CD4-positive, alpha-beta memory T cell (primary cell): ENCODE measurements at regions of chr3 and their contacts with region 1.

Region 1: GRCh38 chr3:46705022-46705530 is 3.9 kb downstream of the TMIE start:
- DNase-seq: peak; percentile 63 to 72 (median 68)
- H3K4me3 ChIP-seq: no peak overlapping the region
- H3K4me3 Mint-ChIP-seq: no peak overlapping the region
- H3K27ac ChIP-seq: no peak overlapping the region
- H3K27ac Mint-ChIP-seq: peak overlapping the region in 1 of 7 donors; percentile 24
- H3K4me1 ChIP-seq: peaks cover 18% of the 10 kb centered on the region
- H3K4me1 Mint-ChIP-seq: peaks cover 6 to 19% (median 9%) of the 10 kb centered on the region in 4 donors
- H3K27me3 ChIP-seq: no peaks in the 10 kb centered on the region
- H3K27me3 Mint-ChIP-seq: peaks cover 0 to 2% of the 10 kb centered on the region in 2 donors

Region 2: DNA sequence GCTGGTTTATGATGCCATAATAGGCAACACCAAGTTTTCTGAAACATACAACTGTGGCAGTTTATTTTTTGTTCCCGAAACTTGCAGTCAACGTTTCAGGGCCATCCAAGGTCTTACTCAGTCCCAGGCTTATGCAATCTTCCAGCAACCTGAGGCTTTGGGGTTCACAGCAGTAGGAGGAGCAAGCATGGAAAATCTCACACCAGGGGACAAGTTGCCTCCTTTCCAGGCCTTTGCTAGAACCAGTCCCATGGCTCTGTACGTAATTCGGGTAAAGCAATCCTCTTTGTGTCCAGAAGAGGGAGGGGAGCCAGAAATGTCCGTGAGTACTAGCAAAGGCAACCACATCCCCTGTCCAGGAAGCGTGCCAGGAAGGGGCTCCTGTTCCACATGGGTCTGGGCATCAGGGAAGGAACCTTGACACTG is 97.5 kb before region 1 on chr3:
- CTCF ChIA-PET with region 1: no interaction called
- POLR2A ChIA-PET with region 1: no interaction called
- intact Hi-C with region 1: no loop called
- DNase-seq: no peak
- H3K4me3 ChIP-seq: no peak overlapping the region
- H3K4me3 Mint-ChIP-seq: no peak overlapping the region
- H3K27ac ChIP-seq: no peak overlapping the region
- H3K27ac Mint-ChIP-seq: no peak overlapping the region
- H3K4me1 ChIP-seq: no peaks in the 10 kb centered on the region
- H3K4me1 Mint-ChIP-seq: no peaks in the 10 kb centered on the region
- H3K27me3 ChIP-seq: peaks cover 5% of the 10 kb centered on the region
- H3K27me3 Mint-ChIP-seq: peaks cover 1% of the 10 kb centered on the region in 2 donors

Region 3: DNA sequence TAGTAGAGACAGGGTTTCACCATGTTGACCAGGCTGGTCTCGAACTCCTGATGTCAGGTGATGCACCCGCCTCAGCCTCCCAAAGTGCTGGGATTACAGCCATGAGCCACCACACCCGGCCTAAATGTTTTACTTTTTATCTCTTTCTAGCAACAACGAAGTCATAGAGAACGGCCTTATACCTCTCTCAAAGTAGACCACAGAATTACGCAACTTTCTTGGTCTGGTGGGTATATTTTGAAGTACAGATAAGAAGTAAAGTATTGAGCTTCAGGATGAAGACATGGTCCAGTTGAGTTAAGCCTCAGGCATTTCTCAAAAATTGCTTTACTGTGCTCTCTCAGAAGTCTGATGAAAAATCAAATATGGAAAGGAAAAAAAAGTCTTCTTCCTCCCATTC is 62.1 kb before region 1 on chr3:
- CTCF ChIA-PET with region 1: no interaction called
- POLR2A ChIA-PET with region 1: no interaction called
- intact Hi-C with region 1: no loop called
- DNase-seq: no peak
- H3K4me3 ChIP-seq: no peak overlapping the region
- H3K4me3 Mint-ChIP-seq: no peak overlapping the region
- H3K27ac ChIP-seq: no peak overlapping the region
- H3K27ac Mint-ChIP-seq: no peak overlapping the region
- H3K4me1 ChIP-seq: no peaks in the 10 kb centered on the region
- H3K4me1 Mint-ChIP-seq: no peaks in the 10 kb centered on the region
- H3K27me3 ChIP-seq: peaks cover 8% of the 10 kb centered on the region
- H3K27me3 Mint-ChIP-seq: peaks cover 17 to 18% of the 10 kb centered on the region in 2 donors

Region 4: GRCh38 chr3:46663591-46664135 is 41.4 kb before region 1 on chr3:
- CTCF ChIA-PET with region 1: no interaction called
- POLR2A ChIA-PET with region 1: no interaction called
- intact Hi-C with region 1: no loop called
- DNase-seq: peak in 1 of 5 donors; percentile 5
- H3K4me3 ChIP-seq: no peak overlapping the region
- H3K4me3 Mint-ChIP-seq: no peak overlapping the region
- H3K27ac ChIP-seq: no peak overlapping the region
- H3K27ac Mint-ChIP-seq: peak overlapping the region in 3 of 7 donors; percentile 36 to 73 (median 37)
- H3K4me1 ChIP-seq: no peaks in the 10 kb centered on the region
- H3K4me1 Mint-ChIP-seq: peaks cover 0 to 10% (median 0%) of the 10 kb centered on the region in 4 donors
- H3K27me3 ChIP-seq: no peaks in the 10 kb centered on the region
- H3K27me3 Mint-ChIP-seq: no peaks in the 10 kb centered on the region

Region 5: DNA sequence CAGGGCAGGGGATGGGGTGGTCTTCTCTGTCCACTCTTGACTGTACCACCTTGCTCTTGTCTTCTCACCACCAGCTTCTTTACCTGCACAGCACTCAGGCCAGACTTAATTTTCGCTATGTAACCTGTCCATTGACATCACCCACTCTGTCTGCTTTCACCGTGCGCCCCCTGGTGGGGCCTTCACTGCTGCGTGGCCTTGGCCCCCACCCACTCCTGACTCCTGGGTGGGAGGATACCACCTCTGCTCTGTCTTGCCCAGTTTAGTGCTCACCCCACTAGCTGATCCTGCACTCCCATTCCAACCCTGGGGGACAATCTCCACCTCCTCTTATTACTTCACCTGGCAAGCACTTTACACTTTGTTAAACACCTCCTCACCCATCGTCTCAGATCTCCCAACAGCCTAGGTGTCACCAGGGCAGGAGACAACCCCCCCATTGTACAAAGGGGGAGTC is 190.2 kb after region 1 on chr3:
- CTCF ChIA-PET with region 1: interaction called, 16 read pairs
- POLR2A ChIA-PET with region 1: no interaction called
- intact Hi-C with region 1: no loop called
- DNase-seq: peak; percentile 71 to 78 (median 74)
- H3K4me3 ChIP-seq: no peak overlapping the region
- H3K4me3 Mint-ChIP-seq: peak overlapping the region in 1 of 8 donors; percentile 18
- H3K27ac ChIP-seq: no peak overlapping the region
- H3K27ac Mint-ChIP-seq: peak overlapping the region in 4 of 7 donors; percentile 0 to 66 (median 46)
- H3K4me1 ChIP-seq: peaks cover 5% of the 10 kb centered on the region
- H3K4me1 Mint-ChIP-seq: peaks cover 6 to 26% (median 15%) of the 10 kb centered on the region in 4 donors
- H3K27me3 ChIP-seq: peaks cover 3% of the 10 kb centered on the region
- H3K27me3 Mint-ChIP-seq: peaks cover 25 to 46% of the 10 kb centered on the region in 2 donors

Region 6: GRCh38 chr3:46909535-46910442 is 204.7 kb after region 1 on chr3:
- CTCF ChIA-PET with region 1: interaction called, 5 read pairs
- POLR2A ChIA-PET with region 1: interaction called, 4 read pairs
- intact Hi-C with region 1: loop called (anchors 1 kb)
- DNase-seq: peak; percentile 64 to 82 (median 70)
- H3K4me3 ChIP-seq: no peak overlapping the region
- H3K4me3 Mint-ChIP-seq: peak overlapping the region in 1 of 8 donors; percentile 23
- H3K27ac ChIP-seq: no peak overlapping the region
- H3K27ac Mint-ChIP-seq: peak overlapping the region in 2 of 7 donors; percentile 4 to 30
- H3K4me1 ChIP-seq: peaks cover 27% of the 10 kb centered on the region
- H3K4me1 Mint-ChIP-seq: peaks cover 13 to 18% (median 17%) of the 10 kb centered on the region in 4 donors
- H3K27me3 ChIP-seq: no peaks in the 10 kb centered on the region
- H3K27me3 Mint-ChIP-seq: no peaks in the 10 kb centered on the region

Region 7: GRCh38 chr3:47324278-47324865 is 619.3 kb after region 1 on chr3:
- CTCF ChIA-PET with region 1: interaction called, 3 read pairs
- POLR2A ChIA-PET with region 1: no interaction called
- intact Hi-C with region 1: loop called (anchors 1 kb)
- DNase-seq: peak; percentile 47 to 63 (median 48)
- H3K4me3 ChIP-seq: no peak overlapping the region
- H3K4me3 Mint-ChIP-seq: no peak overlapping the region
- H3K27ac ChIP-seq: no peak overlapping the region
- H3K27ac Mint-ChIP-seq: peak overlapping the region in 1 of 7 donors; percentile 37
- H3K4me1 ChIP-seq: no peaks in the 10 kb centered on the region
- H3K4me1 Mint-ChIP-seq: peaks cover 0 to 5% (median 1%) of the 10 kb centered on the region in 4 donors
- H3K27me3 ChIP-seq: no peaks in the 10 kb centered on the region
- H3K27me3 Mint-ChIP-seq: no peaks in the 10 kb centered on the region

Region 8: GRCh38 chr3:47370887-47371697 is 666.0 kb after region 1 on chr3:
- CTCF ChIA-PET with region 1: no interaction called
- POLR2A ChIA-PET with region 1: no interaction called
- intact Hi-C with region 1: loop called (anchors 2 kb)
- DNase-seq: peak in 2 of 5 donors; percentile 15 to 22
- H3K4me3 ChIP-seq: no peak overlapping the region
- H3K4me3 Mint-ChIP-seq: no peak overlapping the region
- H3K27ac ChIP-seq: no peak overlapping the region
- H3K27ac Mint-ChIP-seq: no peak overlapping the region
- H3K4me1 ChIP-seq: no peaks in the 10 kb centered on the region
- H3K4me1 Mint-ChIP-seq: no peaks in the 10 kb centered on the region
- H3K27me3 ChIP-seq: no peaks in the 10 kb centered on the region
- H3K27me3 Mint-ChIP-seq: peaks cover 1 to 2% of the 10 kb centered on the region in 2 donors

Region 9: DNA sequence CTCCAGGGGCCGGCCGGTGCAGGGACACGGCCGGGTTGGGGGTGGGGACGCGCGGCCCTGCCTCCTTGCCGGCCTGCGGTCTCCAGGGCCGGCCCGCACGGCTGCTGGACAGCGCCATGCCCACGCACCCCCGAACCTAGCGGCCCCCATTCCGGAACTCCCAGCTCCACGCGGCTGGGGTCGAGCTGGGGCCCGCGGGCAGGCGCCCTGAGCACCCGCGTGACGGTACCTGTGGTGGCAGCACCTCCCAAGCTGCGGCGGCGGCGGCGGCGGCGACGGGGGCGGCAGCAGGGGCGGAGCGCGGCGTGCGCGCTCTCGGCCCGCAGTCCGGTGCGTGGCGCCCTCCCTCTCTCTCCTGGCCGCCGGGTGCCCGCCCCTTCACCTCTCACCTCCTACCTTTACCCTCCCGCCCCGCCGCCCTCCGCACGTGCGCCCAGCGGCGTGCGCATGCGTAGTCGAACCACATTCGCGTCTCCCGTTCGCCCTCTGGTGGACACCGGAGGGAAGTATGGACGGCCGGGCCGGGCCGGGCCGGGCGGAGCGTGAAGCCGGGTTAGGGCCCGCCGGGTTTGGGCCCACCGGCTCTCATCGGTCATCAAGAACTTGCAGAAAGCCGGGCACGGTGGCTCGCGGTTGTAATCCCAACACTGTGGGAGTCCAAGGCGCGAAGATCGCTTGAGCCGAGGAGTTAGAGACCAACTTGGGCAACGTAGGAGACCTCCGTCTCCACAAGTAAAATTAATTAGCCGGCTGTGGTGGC is 770.7 kb after region 1 on chr3 and contains the start of gene SCAP:
- CTCF ChIA-PET with region 1: no interaction called
- POLR2A ChIA-PET with region 1: no interaction called
- intact Hi-C with region 1: loop called (anchors 2 kb)
- DNase-seq: peak; percentile 94 to 95 (median 95)
- H3K4me3 ChIP-seq: peak within 1 kb of the TSS; percentile 43 to 61
- H3K4me3 Mint-ChIP-seq: peak within 1 kb of the TSS; percentile 84 to 97 (median 92)
- H3K27ac ChIP-seq: peak within 1 kb of the TSS; percentile 72
- H3K27ac Mint-ChIP-seq: peak within 1 kb of the TSS; percentile 84 to 94 (median 93)
- H3K4me1 ChIP-seq: peaks cover 26% of the 10 kb centered on the region
- H3K4me1 Mint-ChIP-seq: peaks cover 25 to 48% (median 36%) of the 10 kb centered on the region in 4 donors
- H3K27me3 ChIP-seq: no peaks in the 10 kb centered on the region
- H3K27me3 Mint-ChIP-seq: no peaks in the 10 kb centered on the region
- total RNA-seq, gene SCAP: 85.7 to 88.1 TPM